OCI-LY7 (cell line): ENCODE measurements at regions of chr6 and their contacts with region 1.

Region 1: DNA sequence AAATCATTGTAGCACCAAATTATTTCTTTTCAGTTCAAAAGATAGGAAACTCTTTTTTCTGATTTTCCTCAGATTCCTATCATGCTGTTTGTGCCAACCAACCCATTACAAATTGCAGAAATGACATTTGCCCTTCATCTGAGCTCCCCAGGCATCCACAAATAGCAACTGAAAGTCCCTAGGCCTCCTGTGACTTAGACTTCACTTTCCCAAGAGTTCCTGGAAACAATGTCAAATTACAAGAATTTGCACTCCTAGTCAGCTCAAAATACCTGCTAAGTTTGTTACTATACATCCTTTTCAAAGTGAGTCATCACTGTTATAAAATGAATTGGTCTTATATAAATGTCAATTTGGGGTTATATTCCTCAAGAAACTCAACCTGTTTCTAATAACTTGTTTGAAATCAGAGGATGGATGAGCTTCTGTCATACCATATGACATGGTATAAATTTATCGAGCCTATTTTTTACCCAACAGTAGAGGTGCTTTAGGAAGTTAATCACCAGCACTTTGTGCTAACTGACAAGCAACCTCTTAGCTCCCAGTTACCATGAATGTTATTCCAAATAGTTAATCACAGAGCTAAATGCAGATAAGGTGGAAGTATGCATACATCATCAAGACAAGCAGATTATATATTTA is 256.5 kb downstream of the HACE1 start:
- DNase-seq: no peak
- H3K4me3 ChIP-seq: no peak overlapping the region
- H3K27ac ChIP-seq: no peak overlapping the region
- H3K4me1 ChIP-seq: peaks cover 5% of the 10 kb centered on the region
- CTCF ChIP-seq: no peak

Region 2: DNA sequence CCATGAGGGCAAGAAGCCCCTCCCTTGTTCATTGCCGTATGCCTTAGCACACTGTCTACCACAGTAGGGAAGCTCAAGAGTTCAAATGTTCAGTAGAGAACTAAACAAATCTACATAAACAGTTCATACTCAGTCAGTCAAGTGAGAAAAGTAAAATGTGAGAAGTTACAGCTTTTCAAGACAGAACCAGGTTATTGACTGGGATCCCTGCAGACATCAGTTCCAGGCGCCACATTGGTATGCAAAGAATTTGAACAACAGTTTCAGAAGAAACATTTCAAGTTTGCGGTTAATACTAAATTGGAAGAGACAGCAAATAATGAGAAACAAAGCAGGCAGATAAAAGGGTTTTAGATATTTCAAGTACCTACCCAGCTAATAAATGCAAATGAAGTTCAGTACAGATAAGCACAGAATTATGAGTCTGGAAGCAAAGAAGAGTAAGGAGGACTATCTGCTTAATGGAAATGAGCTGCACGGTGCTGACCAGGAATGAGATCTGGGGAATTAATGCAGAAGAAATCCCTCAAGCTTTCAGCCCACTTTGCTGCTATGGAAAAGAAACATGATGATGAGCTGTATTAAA is 10.3 kb after region 1 on chr6:
- CTCF ChIA-PET with region 1: no interaction called
- POLR2A ChIA-PET with region 1: interaction called, 13 read pairs
- intact Hi-C with region 1: no loop called
- DNase-seq: no peak
- H3K4me3 ChIP-seq: no peak overlapping the region
- H3K27ac ChIP-seq: no peak overlapping the region
- H3K4me1 ChIP-seq: no peaks in the 10 kb centered on the region
- CTCF ChIP-seq: no peak